Natural killer cell (primary cell): ENCODE measurements at regions of chr4 and their contacts with region 1.

Region 1: DNA sequence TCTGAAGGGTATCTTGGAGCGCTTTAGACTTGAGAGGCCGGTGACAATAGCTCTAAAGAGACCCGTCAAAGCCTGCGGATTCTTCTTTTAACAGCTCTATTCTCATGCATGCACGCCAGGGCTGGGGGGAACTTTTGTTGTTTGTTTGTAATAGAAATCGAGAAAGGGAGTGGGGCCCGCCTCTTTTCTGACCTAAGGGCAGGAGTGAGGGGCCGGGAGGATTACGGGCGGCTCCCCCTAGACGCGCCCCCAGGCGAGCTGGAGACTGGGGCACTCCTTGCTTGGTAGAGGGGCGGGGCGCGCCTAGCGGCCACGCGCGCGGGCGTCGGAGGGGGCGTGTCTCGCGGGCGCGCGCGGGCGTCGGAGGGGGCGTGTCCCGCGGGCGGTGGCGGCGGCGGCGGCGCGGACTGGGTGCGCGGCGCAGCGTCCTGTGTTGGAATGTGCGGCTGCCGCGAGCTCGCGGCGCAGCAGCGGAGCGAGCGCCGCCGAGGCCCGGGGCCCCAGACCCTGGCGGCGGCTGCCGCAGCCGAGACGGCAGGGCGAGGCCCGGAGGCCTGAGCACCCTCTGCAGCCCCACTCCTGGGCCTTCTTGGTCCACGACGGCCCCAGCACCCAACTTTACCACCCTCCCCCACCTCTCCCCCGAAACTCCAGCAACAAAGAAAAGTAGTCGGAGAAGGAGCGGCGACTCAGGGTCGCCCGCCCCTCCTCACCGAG is at the start of gene REST:
- DNase-seq: peak; percentile 88 to 91
- ATAC-seq: peak; percentile 67 to 88 (median 71)
- H3K4me3 ChIP-seq: peak within 1 kb of the TSS; percentile 95
- H3K4me3 Mint-ChIP-seq: peak within 1 kb of the TSS; percentile 94
- H3K27ac ChIP-seq: peak within 1 kb of the TSS; percentile 58
- H3K27ac Mint-ChIP-seq: peak within 1 kb of the TSS; percentile 91 to 93
- H3K4me1 ChIP-seq: peaks cover 22% of the 10 kb centered on the region
- H3K4me1 Mint-ChIP-seq: peaks cover 32 to 40% of the 10 kb centered on the region in 2 donors
- H3K27me3 ChIP-seq: no peaks in the 10 kb centered on the region
- H3K27me3 Mint-ChIP-seq: no peaks in the 10 kb centered on the region
- CTCF ChIP-seq: no peak
- total RNA-seq, gene REST: 52.1 to 71.3 (median 67.6) TPM

Region 2: DNA sequence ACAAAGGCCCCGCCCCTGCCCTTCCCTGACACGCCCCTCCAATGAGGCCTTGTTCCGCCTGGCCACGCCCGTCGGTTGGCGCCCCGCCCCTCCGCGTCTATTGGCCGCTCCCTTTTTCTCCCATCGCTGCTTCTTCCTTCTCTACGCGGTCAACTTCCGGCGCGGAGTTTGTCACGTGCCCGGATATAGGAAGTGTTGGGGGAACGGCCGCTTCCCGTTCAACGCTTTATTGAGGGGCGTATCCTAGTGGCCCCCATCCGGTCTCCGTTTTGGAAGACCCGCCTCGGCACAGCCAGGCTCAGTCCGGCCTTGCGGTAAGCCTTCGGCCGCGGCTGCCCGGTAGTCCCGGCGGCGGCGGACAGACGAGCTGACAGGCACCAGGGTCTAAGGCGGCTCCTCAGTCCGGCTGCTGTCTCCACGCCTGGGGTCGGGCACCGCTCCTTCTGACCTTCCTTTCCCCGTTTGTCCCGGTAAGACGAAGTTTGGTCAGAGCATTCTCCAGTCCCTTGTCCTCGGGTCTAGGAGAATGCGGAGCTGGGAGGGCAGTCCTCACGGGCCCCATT is 1054.1 kb before region 1 on chr4 and contains the start of gene EXOC1:
- intact Hi-C with region 1: loop called (anchors 10 kb)
- DNase-seq: peak; percentile 88 to 97
- ATAC-seq: peak; percentile 94 to 96 (median 95)
- H3K4me3 ChIP-seq: peak within 1 kb of the TSS; percentile 98
- H3K4me3 Mint-ChIP-seq: peak within 1 kb of the TSS; percentile 45
- H3K27ac ChIP-seq: peak within 1 kb of the TSS; percentile 73
- H3K27ac Mint-ChIP-seq: peak within 1 kb of the TSS in 1 of 2 donors; percentile 91
- H3K4me1 ChIP-seq: peaks cover 14% of the 10 kb centered on the region
- H3K4me1 Mint-ChIP-seq: peaks cover 17 to 20% of the 10 kb centered on the region in 2 donors
- H3K27me3 ChIP-seq: no peaks in the 10 kb centered on the region
- H3K27me3 Mint-ChIP-seq: peaks cover 0 to 10% of the 10 kb centered on the region in 2 donors
- CTCF ChIP-seq: no peak
- total RNA-seq, gene EXOC1: 16.3 to 25.8 (median 20.9) TPM

Region 3: GRCh38 chr4:56655209-56655626 is 252.4 kb before region 1 on chr4:
- intact Hi-C with region 1: loop called (anchors 10 kb)
- DNase-seq: peak in 1 of 2 donors; percentile 53
- ATAC-seq: peak in 2 of 3 donors; percentile 16 to 31
- H3K4me3 ChIP-seq: peak overlapping the region; percentile 66
- H3K4me3 Mint-ChIP-seq: peak overlapping the region; percentile 94
- H3K27ac ChIP-seq: peak overlapping the region; percentile 73
- H3K27ac Mint-ChIP-seq: peak overlapping the region; percentile 95 to 98
- H3K4me1 ChIP-seq: peaks cover 59% of the 10 kb centered on the region
- H3K4me1 Mint-ChIP-seq: peaks cover 74 to 76% of the 10 kb centered on the region in 2 donors
- H3K27me3 ChIP-seq: no peaks in the 10 kb centered on the region
- H3K27me3 Mint-ChIP-seq: no peaks in the 10 kb centered on the region
- CTCF ChIP-seq: no peak